Natural killer cell (primary cell): ENCODE measurements at regions of chr13 and their contacts with region 1.

Region 1: GRCh38 chr13:100514788-100515409 is 73.7 kb downstream of the GGACT start:
- DNase-seq: peak; percentile 64 to 87
- ATAC-seq: peak; percentile 84 to 93 (median 92)
- H3K4me3 ChIP-seq: no peak overlapping the region
- H3K4me3 Mint-ChIP-seq: peak overlapping the region; percentile 25
- H3K27ac ChIP-seq: no peak overlapping the region
- H3K27ac Mint-ChIP-seq: peak overlapping the region in 1 of 2 donors; percentile 33
- H3K4me1 ChIP-seq: peaks cover 11% of the 10 kb centered on the region
- H3K4me1 Mint-ChIP-seq: peaks cover 42 to 46% of the 10 kb centered on the region in 2 donors
- H3K27me3 ChIP-seq: no peaks in the 10 kb centered on the region
- H3K27me3 Mint-ChIP-seq: no peaks in the 10 kb centered on the region
- CTCF ChIP-seq: peak; percentile 99

Region 2: DNA sequence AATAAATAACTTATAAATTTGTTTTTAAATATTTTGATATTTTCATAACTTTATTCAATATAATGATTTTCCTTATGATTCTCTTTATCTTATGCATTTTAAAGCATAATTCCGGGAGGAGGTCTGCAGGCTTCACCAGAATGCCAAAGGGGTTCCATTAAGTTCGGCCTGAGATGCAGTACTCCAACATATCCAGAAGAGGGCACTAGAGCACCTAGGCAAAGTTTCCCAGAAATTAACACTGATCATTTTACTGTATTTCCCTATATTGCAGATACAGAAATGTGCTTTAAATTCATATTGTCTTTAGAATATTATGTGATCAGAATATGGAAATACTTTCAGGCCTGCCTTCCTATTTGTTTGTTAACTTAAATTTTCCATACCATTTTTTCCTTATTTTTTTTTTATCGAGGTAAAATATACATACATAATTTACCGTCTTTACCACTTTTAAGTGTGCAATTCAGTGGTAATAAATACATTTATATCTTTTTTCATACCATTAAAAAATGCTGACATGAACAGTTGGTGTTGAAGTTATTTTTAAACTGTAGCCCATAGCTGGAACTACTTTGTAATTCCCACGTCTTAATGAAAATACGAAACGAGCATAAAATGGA is 1072.5 kb before region 1 on chr13:
- intact Hi-C with region 1: loop called (anchors 10 kb)
- DNase-seq: peak in 1 of 2 donors; percentile 83
- ATAC-seq: peak; percentile 91 to 98 (median 96)
- H3K4me3 ChIP-seq: no peak overlapping the region
- H3K4me3 Mint-ChIP-seq: no peak overlapping the region
- H3K27ac ChIP-seq: no peak overlapping the region
- H3K27ac Mint-ChIP-seq: no peak overlapping the region
- H3K4me1 ChIP-seq: peaks cover 2% of the 10 kb centered on the region
- H3K4me1 Mint-ChIP-seq: peaks cover 0 to 4% of the 10 kb centered on the region in 2 donors
- H3K27me3 ChIP-seq: no peaks in the 10 kb centered on the region
- H3K27me3 Mint-ChIP-seq: peaks cover 16 to 22% of the 10 kb centered on the region in 2 donors
- CTCF ChIP-seq: peak; percentile 98

Region 3: GRCh38 chr13:99656092-99656745 is 858.7 kb before region 1 on chr13:
- intact Hi-C with region 1: loop called (anchors 1 kb)
- DNase-seq: peak; percentile 67 to 94
- ATAC-seq: peak; percentile 83 to 89 (median 88)
- H3K4me3 ChIP-seq: no peak overlapping the region
- H3K4me3 Mint-ChIP-seq: peak overlapping the region; percentile 83
- H3K27ac ChIP-seq: no peak overlapping the region
- H3K27ac Mint-ChIP-seq: peak overlapping the region in 1 of 2 donors; percentile 7
- H3K4me1 ChIP-seq: peaks cover 26% of the 10 kb centered on the region
- H3K4me1 Mint-ChIP-seq: peaks cover 32 to 33% of the 10 kb centered on the region in 2 donors
- H3K27me3 ChIP-seq: peaks cover 3% of the 10 kb centered on the region
- H3K27me3 Mint-ChIP-seq: peaks cover 9 to 22% of the 10 kb centered on the region in 2 donors
- CTCF ChIP-seq: peak; percentile 90

Region 4: DNA sequence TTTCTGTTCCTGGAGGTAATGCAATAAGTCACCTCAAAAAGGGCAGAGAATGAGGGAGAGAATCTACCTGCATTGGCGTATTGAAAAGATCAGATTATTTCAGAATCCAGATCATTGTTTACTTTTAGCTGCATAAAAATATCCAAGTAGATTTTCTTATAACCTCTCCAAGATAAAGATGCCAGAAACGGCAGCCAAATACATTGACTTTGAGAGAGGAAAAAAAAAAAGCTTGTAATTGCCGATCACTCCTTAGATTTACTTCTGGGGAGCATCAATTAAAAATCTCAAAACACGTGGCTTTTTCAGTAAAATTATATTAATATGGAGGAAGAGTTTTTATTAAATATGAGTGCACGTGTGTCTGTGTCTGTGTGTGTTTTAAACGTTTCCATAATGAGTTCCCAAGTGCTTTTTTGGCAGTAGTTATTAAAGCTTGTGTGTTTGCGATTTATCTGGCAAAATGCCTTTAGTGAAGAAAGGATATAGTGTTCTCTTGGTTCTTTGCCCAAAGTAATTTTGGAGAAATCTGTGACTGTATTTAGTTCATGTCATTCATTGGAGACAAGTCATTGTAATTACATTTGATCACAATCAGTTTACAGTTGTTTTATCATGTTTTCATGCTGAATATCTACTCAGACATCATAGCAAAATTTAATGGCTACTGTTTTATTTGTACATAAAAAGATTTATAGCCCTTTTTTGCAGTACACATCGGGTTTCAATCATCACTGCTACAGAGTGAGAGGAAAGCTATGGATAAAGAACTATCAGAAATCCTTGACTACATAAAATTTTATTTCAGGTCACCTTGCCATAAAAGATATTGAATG is 837.6 kb before region 1 on chr13:
- intact Hi-C with region 1: no loop called
- DNase-seq: no peak
- ATAC-seq: no peak
- H3K4me3 ChIP-seq: no peak overlapping the region
- H3K4me3 Mint-ChIP-seq: no peak overlapping the region
- H3K27ac ChIP-seq: no peak overlapping the region
- H3K27ac Mint-ChIP-seq: no peak overlapping the region
- H3K4me1 ChIP-seq: no peaks in the 10 kb centered on the region
- H3K4me1 Mint-ChIP-seq: peaks cover 0 to 5% of the 10 kb centered on the region in 2 donors
- H3K27me3 ChIP-seq: no peaks in the 10 kb centered on the region
- H3K27me3 Mint-ChIP-seq: peaks cover 4 to 7% of the 10 kb centered on the region in 2 donors
- CTCF ChIP-seq: no peak

Region 5: DNA sequence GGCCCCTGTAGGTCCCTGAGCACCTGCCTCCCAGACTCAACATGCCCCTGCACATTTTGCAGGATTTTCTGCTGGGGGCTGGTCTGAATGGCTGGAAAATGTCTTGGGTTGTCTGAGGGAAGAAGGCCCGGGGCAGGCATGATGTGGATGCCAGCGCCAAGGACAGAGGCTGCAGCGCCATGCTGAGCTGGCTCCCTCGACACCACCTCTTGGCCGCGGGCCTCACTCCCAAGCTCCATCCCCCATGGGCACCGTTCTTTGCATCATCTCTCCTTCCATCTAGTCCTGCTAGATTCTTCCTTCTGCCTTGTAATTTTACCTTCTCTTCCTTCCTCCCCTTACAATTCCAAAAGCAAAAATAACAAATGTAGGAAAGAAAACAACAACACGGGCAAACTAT is 613.9 kb before region 1 on chr13:
- intact Hi-C with region 1: loop called (anchors 5 kb)
- DNase-seq: no peak
- ATAC-seq: no peak
- H3K4me3 ChIP-seq: no peak overlapping the region
- H3K4me3 Mint-ChIP-seq: no peak overlapping the region
- H3K27ac ChIP-seq: no peak overlapping the region
- H3K27ac Mint-ChIP-seq: no peak overlapping the region
- H3K4me1 ChIP-seq: no peaks in the 10 kb centered on the region
- H3K4me1 Mint-ChIP-seq: peaks cover 6 to 8% of the 10 kb centered on the region in 2 donors
- H3K27me3 ChIP-seq: peaks cover 19% of the 10 kb centered on the region
- H3K27me3 Mint-ChIP-seq: peaks cover 50 to 66% of the 10 kb centered on the region in 2 donors
- CTCF ChIP-seq: no peak

Region 6: DNA sequence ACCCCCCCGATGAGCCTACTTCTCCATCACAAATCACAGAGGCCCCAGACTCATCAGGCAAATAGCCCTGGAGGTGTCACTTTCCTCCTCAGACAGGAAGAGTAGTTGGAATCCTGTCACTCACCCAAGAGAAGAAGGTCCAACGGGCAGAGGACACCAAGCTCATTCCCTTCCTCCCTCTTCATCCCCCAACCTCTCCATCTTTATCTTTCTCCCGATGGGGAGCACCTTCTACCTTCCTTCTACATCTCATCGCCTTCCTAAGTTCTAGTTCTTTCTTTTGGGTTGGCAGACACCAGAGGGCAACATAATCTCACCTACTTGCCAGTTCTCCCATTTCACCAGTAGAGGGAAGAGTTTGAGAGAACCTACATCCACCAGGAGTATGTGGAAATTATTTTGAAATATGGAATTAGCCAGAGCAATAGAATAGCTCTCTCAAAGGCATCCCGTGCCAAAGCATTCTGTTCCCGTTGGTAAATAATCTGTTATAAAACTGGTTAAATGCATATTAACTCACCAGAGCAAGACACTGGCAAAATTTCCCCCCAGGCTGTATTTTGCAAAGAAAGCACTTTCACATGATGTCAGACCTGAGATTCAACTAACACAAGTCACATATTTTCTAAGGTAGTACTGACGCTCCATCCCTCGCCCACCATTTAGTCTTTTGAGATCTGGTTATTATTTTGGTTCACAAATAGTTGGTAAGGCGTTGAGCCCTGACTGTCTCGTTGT is 598.4 kb before region 1 on chr13:
- intact Hi-C with region 1: loop called (anchors 1 kb)
- DNase-seq: peak in 1 of 2 donors; percentile 76
- ATAC-seq: peak; percentile 62 to 87 (median 64)
- H3K4me3 ChIP-seq: no peak overlapping the region
- H3K4me3 Mint-ChIP-seq: no peak overlapping the region
- H3K27ac ChIP-seq: no peak overlapping the region
- H3K27ac Mint-ChIP-seq: no peak overlapping the region
- H3K4me1 ChIP-seq: peaks cover 6% of the 10 kb centered on the region
- H3K4me1 Mint-ChIP-seq: peaks cover 0 to 6% of the 10 kb centered on the region in 2 donors
- H3K27me3 ChIP-seq: no peaks in the 10 kb centered on the region
- H3K27me3 Mint-ChIP-seq: peaks cover 28 to 39% of the 10 kb centered on the region in 2 donors
- CTCF ChIP-seq: peak; percentile 72

Region 7: GRCh38 chr13:100442095-100442832 is 72.6 kb before region 1 on chr13:
- intact Hi-C with region 1: loop called (anchors 1 kb)
- DNase-seq: no peak
- ATAC-seq: peak in 1 of 3 donors; percentile 39
- H3K4me3 ChIP-seq: no peak overlapping the region
- H3K4me3 Mint-ChIP-seq: no peak overlapping the region
- H3K27ac ChIP-seq: no peak overlapping the region
- H3K27ac Mint-ChIP-seq: peak overlapping the region in 1 of 2 donors; percentile 49
- H3K4me1 ChIP-seq: no peaks in the 10 kb centered on the region
- H3K4me1 Mint-ChIP-seq: peaks cover 8 to 14% of the 10 kb centered on the region in 2 donors
- H3K27me3 ChIP-seq: no peaks in the 10 kb centered on the region
- H3K27me3 Mint-ChIP-seq: no peaks in the 10 kb centered on the region
- CTCF ChIP-seq: no peak

Region 8: GRCh38 chr13:100542826-100543156 is 27.9 kb after region 1 on chr13:
- intact Hi-C with region 1: no loop called
- DNase-seq: peak in 1 of 2 donors; percentile 58
- ATAC-seq: peak in 2 of 3 donors; percentile 35 to 37
- H3K4me3 ChIP-seq: no peak overlapping the region
- H3K4me3 Mint-ChIP-seq: no peak overlapping the region
- H3K27ac ChIP-seq: no peak overlapping the region
- H3K27ac Mint-ChIP-seq: no peak overlapping the region
- H3K4me1 ChIP-seq: peaks cover 4% of the 10 kb centered on the region
- H3K4me1 Mint-ChIP-seq: peaks cover 5 to 11% of the 10 kb centered on the region in 2 donors
- H3K27me3 ChIP-seq: no peaks in the 10 kb centered on the region
- H3K27me3 Mint-ChIP-seq: no peaks in the 10 kb centered on the region
- CTCF ChIP-seq: peak; percentile 43

Region 9: DNA sequence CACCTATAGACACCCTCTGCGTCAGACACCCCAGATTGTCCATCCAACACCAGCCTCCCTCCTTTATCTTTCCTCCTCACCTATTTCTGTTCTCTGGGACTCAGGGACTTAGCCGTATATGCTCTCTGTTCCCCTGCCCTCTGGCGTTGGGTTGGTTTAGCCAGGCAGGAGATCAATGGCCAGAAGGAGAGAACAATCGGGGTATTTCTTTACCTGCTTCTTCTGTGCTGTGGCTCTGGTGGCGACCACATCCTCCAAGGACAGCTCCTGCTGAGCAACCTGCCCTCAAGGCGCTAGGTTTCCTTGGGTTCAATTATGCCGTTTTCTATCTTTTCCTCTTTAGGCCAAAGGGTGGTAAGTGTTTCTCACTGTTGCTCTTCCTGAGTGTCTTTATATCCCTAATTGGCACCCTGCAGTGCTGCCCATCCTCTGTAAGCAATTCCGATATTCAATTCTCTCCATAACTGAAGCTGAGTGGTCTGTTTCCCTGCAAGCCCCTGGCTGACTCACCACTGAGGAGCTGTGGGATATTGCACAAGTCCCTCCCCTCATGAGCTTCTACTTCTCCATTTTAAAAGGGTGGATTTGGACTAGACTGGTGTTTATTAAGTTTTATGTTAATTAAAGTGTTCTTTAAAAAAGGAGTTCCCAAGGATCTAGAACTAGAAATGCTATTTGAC is 223.4 kb after region 1 on chr13:
- intact Hi-C with region 1: no loop called
- DNase-seq: no peak
- ATAC-seq: no peak
- H3K4me3 ChIP-seq: no peak overlapping the region
- H3K4me3 Mint-ChIP-seq: no peak overlapping the region
- H3K27ac ChIP-seq: no peak overlapping the region
- H3K27ac Mint-ChIP-seq: no peak overlapping the region
- H3K4me1 ChIP-seq: no peaks in the 10 kb centered on the region
- H3K4me1 Mint-ChIP-seq: no peaks in the 10 kb centered on the region
- H3K27me3 ChIP-seq: no peaks in the 10 kb centered on the region
- H3K27me3 Mint-ChIP-seq: peaks cover 10 to 35% of the 10 kb centered on the region in 2 donors
- CTCF ChIP-seq: no peak